HEK293 (cell line): ENCODE measurements at regions of chr9 and their contacts with region 1.

Region 1: DNA sequence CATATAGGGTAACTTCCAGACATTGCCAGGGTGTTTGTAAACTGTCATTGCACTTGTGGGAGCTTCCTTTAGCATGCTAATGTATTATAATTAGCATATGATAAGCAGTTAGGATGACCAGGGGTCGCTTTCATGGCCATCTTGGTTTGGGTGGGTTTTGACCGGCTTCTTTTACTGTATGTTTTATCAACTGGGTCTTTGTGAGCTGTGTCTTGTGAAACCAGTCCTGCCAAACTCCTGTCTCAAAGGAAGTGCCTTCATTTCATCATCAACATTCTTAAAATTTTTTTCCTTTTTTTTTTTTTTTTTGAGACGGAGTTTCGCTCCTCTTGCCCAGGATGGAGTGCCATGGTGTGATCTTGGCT is 11.9 kb upstream of the MELK start:
- H3K4me3 ChIP-seq: no peak overlapping the region
- H3K27ac ChIP-seq: no peak overlapping the region
- H3K4me1 ChIP-seq: no peaks in the 10 kb centered on the region
- CTCF ChIP-seq: no peak

Region 2: GRCh38 chr9:36400332-36401163 is 160.3 kb before region 1 on chr9:
- CTCF ChIA-PET with region 1: interaction called, 161 read pairs
- POLR2A ChIA-PET with region 1: no interaction called
- H3K4me3 ChIP-seq: peak overlapping the region; percentile 97
- H3K27ac ChIP-seq: peak overlapping the region; percentile 90
- H3K4me1 ChIP-seq: peaks cover 5% of the 10 kb centered on the region
- CTCF ChIP-seq: peak; percentile 36; the same call in 1 of the 2 replicates

Region 3: GRCh38 chr9:36415822-36416515 is 144.9 kb before region 1 on chr9:
- CTCF ChIA-PET with region 1: interaction called, 13 read pairs
- POLR2A ChIA-PET with region 1: no interaction called
- H3K4me3 ChIP-seq: no peak overlapping the region
- H3K27ac ChIP-seq: no peak overlapping the region
- H3K4me1 ChIP-seq: peaks cover 4% of the 10 kb centered on the region; the same call in 1 of the 2 replicates
- CTCF ChIP-seq: no peak

Region 4: GRCh38 chr9:36571333-36571732 is 10.5 kb after region 1 on chr9:
- CTCF ChIA-PET with region 1: interaction called, 18 read pairs
- POLR2A ChIA-PET with region 1: interaction called, 4 read pairs
- H3K4me3 ChIP-seq: no peak overlapping the region
- H3K27ac ChIP-seq: no peak overlapping the region
- H3K4me1 ChIP-seq: peaks cover 6% of the 10 kb centered on the region; the same call in 1 of the 2 replicates
- CTCF ChIP-seq: no peak

Region 5: DNA sequence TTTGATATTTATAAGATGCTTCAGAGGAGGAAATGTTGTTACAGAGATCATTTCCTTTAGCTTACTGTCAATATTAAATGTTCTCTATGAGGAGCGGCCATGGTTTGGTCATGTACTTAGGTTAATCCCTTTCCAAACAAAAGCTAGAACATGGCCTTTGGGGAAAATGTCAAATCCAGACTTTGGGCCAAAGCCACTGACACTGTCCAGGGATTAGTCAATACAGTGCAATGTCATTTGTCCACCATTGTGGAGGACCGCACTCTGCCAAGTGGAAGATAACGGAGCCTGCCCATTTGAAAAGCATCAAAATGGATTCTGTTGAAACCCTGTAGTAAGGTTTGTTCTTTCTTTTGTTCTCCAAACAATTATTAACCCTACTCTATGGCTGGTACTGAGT is 1140.1 kb after region 1 on chr9:
- CTCF ChIA-PET with region 1: no interaction called
- POLR2A ChIA-PET with region 1: no interaction called
- H3K4me3 ChIP-seq: no peak overlapping the region
- H3K27ac ChIP-seq: no peak overlapping the region
- H3K4me1 ChIP-seq: no peaks in the 10 kb centered on the region
- CTCF ChIP-seq: no peak